RWPE1 (cell line): ENCODE measurements at regions of chr5 and their contacts with region 1.

Region 1: GRCh38 chr5:73448463-73449136 is at the start of gene FOXD1:
- DNase-seq: peak; percentile 84
- H3K27ac ChIP-seq: peak within 1 kb of the TSS; percentile 95
- CTCF ChIP-seq: peak; percentile 27; the same call in 1 of the 2 replicates

Region 2: GRCh38 chr5:73088026-73088425 is 360.6 kb before region 1 on chr5:
- CTCF ChIA-PET with region 1: interaction called, 12 read pairs
- POLR2A ChIA-PET with region 1: no interaction called
- DNase-seq: no peak
- H3K27ac ChIP-seq: no peak overlapping the region
- CTCF ChIP-seq: no peak

Region 3: GRCh38 chr5:73160239-73160671 is 288.3 kb before region 1 on chr5:
- CTCF ChIA-PET with region 1: no interaction called
- POLR2A ChIA-PET with region 1: no interaction called
- DNase-seq: no peak
- H3K27ac ChIP-seq: no peak overlapping the region
- CTCF ChIP-seq: no peak

Region 4: DNA sequence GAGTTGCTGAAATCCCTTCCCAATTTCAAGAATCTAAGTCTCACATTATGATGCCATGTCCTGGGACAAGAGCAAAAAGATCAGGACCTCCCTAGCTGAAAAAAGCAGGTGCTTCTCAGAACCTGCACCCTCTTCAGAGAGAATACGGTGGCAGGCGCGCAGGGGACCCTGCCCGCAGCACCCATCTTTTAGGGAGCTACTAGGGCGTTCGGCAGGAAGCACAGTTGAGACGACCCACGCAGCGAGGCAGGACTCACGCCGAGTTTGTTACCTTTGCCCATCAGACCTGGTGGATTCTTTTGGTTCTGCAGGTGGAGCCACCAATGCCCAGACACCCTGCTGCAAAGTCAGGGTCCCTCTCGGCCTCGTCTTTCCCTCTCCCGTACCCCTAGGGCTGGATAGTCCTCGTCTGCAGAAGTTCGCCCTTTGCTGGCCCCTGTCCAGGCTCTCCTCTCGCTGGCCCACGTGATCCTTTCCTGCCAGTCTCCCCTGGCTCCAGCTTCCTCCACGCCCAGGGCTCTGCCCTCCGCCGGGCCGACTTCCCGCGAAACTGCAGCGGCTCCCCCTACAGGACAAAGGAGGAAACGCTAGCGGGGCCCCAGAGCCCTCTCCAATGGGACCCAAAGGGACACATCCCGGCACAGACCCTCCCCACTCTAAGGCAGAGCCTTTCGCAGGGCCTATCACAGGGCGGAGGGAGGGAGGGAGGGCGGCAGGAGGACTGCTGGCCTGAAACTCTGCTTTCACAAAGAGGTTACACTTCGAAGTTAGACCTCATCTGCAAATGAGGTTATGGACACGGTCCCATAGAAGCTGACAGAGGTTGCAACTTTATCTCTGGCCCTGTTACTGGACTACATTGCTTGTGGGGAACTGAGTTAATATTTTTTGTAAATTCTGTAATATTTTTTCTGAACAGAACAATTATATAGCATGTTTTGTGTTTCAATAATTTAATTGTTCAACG is 246.8 kb before region 1 on chr5:
- CTCF ChIA-PET with region 1: interaction called, 19 read pairs
- POLR2A ChIA-PET with region 1: no interaction called
- DNase-seq: peak; percentile 94
- H3K27ac ChIP-seq: no peak overlapping the region
- CTCF ChIP-seq: peak; percentile 91

Region 5: DNA sequence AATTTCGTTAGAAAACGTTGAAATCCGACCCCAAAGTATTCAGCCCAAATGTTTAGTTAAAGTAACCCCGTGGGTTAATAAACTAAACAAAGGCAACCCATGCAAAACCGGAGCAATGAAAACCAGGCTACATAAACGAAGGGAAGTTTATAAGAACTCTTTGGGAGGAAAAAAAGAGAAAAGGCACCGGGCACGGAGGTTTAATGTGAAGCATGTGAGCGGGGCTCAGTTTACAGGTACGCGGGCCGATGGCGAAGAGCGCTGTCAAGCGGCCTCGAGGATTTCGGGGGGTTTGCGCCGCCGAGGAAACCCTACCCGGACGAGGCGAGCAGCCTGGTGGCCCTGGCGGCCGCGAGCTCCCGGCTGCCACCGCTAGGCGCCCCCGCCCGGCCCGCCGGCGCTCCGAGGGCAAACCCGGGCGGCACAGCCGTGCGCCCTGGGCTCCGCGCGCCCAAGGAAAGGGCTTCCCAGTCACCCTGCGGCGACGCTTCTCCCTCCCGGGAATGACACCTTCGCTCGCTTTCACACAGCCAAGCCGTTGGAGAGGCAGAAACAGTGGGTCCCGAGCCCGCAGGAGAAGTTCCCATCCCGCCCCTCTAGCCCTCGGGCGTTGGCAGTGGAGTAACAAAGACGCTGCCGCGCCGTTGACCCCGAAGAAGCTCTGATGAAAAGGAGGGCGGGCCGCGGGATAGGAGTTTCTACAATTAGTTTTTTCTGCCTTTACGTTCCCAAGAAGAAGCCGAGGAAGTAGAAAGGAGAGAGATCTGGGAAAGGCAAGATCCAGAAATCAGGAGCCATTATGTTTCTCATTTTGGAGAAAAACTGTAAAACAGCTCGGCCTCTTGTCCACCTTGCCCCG is 149.6 kb before region 1 on chr5:
- CTCF ChIA-PET with region 1: interaction called, 10 read pairs
- POLR2A ChIA-PET with region 1: no interaction called
- DNase-seq: peak; percentile 77
- H3K27ac ChIP-seq: no peak overlapping the region
- CTCF ChIP-seq: peak; percentile 78

Region 6: GRCh38 chr5:73312146-73312871 is 136.3 kb before region 1 on chr5:
- CTCF ChIA-PET with region 1: interaction called, 10 read pairs
- POLR2A ChIA-PET with region 1: interaction called, 5 read pairs
- DNase-seq: no peak
- H3K27ac ChIP-seq: peak overlapping the region; percentile 78
- CTCF ChIP-seq: no peak

Region 7: DNA sequence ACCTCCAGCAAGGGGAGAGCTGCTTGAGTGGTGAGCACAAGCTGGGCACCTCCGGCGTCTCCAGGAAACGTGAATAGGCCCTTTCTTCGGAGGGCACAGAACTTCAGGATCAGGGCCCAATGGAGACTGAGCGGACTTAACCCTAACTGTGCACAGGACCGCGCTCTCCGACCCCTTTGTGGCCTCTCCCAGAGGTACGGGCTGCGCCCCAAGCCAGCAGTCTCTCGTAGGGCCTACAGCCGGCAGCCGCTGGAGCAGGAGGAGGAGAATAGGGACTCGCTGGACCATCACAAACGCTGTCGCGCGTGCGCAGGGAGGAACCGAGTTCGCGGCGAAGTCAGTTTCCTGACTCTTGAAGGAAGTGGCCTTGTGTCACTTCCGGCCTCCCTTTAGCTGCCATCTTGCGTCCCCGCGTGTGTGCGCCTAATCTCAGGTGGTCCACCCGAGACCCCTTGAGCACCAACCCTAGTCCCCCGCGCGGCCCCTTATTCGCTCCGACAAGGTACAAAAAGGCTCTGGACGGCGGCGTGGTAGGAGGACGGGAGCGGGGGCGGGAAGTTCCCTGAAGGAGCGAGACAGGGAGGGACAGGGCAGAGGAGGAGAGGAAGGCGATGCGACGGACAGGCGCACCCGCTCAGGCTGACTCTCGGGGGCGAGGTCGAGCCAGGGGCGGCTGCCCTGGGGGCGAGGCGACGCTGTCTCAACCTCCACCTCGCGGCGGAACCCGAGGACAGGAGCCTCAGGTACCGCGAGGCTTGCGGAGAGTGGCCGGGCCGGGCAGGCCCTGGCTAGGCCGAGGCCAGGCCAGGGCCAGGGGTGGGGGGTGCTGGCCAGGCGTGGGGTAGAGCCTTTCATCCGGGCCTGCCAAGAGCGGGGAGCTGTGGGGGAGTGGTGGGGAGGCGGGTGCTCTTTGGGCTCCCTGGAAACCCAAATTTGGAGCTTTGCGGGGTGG is 49.7 kb after region 1 on chr5 and contains the start of gene BTF3:
- CTCF ChIA-PET with region 1: interaction called, 12 read pairs
- POLR2A ChIA-PET with region 1: interaction called, 3 read pairs
- DNase-seq: peak; percentile 97
- H3K27ac ChIP-seq: peak within 1 kb of the TSS; percentile 96
- CTCF ChIP-seq: no peak

Region 8: GRCh38 chr5:73687357-73687756 is 238.8 kb after region 1 on chr5:
- CTCF ChIA-PET with region 1: no interaction called
- POLR2A ChIA-PET with region 1: interaction called, 12 read pairs
- DNase-seq: no peak
- H3K27ac ChIP-seq: no peak overlapping the region
- CTCF ChIP-seq: no peak